OCI-LY7 (cell line): ENCODE measurements at regions of chr5 and their contacts with region 1.

Region 1: DNA sequence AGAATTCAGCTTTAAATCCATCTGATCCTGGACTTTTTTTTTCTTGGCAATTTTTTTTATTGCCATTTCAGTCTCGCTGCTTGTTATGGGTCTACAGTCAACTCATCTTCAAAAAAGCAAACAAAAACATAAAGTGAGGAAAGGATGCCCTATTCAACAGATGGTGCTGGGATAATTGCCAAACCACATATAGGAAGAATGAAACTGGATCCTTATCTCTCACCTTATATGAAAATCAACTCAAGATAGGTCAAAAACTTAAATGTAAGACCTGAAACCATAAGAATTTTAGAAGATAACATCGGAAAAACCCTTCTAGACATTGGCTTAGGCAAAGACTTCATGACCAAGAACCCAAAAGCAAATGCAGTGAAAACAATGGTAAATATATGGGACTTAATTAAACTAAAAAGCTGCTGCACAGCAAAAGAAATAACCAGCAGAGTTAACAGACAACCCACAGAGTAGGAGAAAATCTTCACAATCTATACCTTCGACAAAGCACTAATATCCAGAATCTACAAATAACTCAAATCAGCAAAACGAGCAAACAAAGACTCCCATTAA is 389.2 kb upstream of the ST8SIA4 start:
- DNase-seq: no peak
- H3K4me3 ChIP-seq: no peak overlapping the region
- H3K27ac ChIP-seq: no peak overlapping the region
- H3K4me1 ChIP-seq: no peaks in the 10 kb centered on the region
- CTCF ChIP-seq: no peak

Region 2: GRCh38 chr5:101271416-101271815 is 20.9 kb before region 1 on chr5:
- CTCF ChIA-PET with region 1: no interaction called
- POLR2A ChIA-PET with region 1: interaction called, 10 read pairs
- intact Hi-C with region 1: no loop called
- DNase-seq: no peak
- H3K4me3 ChIP-seq: no peak overlapping the region
- H3K27ac ChIP-seq: no peak overlapping the region
- H3K4me1 ChIP-seq: no peaks in the 10 kb centered on the region
- CTCF ChIP-seq: no peak

Region 3: GRCh38 chr5:101461455-101461854 is 169.2 kb after region 1 on chr5:
- CTCF ChIA-PET with region 1: no interaction called
- POLR2A ChIA-PET with region 1: no interaction called
- intact Hi-C with region 1: no loop called
- DNase-seq: no peak
- H3K4me3 ChIP-seq: no peak overlapping the region
- H3K27ac ChIP-seq: no peak overlapping the region
- H3K4me1 ChIP-seq: no peaks in the 10 kb centered on the region
- CTCF ChIP-seq: no peak